ENCODE measurements at regions of chr5 and their contacts with region 1.

Region 1: GRCh38 chr5:134738133-134738962 is at the start of gene CAMLG:
- DNase-seq: peak; percentile 95 to 99 (median 98)

Region 2: DNA sequence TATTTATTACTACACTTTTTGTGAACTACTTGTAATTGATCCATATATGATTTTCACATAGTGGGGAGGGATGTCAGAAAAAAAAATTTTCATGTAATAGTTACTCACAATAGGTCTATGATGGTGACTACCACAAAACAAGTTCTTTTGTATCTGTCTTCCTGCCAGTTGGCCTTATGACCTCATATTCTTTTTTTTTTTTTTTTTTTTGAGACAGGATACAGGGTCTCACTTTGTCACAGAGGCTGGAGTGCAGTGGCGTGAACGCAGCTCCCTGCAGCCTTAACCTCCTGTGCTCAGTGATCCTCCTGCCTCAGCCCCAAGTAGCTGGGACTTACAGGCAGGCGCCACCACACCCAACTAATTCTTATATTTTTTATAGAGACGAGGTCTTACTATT is 78.9 kb before region 1 on chr5:
- intact Hi-C with region 1: loop called (anchors 10 kb)
- DNase-seq: no peak

Region 3: DNA sequence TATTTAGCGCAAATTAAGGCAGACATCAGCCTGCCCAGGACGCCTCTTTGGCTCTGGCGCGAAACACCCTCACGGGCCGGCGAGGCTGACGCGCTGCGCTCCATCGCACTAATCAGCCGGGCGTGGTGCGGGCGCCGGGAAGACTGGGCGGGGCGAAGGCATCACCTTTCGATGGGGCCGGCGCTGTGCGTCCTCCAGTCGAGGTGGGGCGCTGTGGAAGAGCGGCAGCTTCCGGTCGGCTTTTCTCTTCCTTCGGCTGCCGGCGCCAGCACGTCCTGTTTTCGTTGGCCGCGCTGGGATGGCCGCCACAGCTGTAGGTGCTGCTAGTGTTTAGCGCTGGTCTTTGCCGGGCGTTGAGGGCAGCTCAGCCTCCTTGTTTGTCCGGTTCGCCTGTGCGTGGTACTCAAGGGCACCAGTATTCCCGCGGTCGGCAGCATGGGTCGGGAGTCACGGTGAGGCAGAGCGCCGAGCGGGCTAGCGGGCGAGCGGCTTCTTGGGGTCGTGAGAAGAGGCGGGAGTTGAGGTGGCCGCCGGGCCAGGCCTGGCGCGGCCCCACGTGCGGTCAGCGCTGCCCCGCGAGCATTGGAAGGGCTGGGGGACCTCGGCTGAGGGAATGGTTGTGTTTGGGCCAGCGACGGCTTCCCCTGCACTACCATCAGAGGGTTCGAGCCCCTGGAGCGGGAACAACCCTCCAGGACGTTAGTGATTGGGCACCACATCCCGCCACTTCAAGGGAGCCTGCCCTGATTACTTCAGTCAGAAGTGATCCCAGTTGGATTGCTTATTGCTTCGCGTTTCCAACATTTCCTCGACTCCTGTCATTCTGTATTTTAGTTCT is 20.4 kb after region 1 on chr5 and contains the start of gene DDX46:
- intact Hi-C with region 1: loop called (anchors 1 kb)
- DNase-seq: peak; percentile 81 to 97 (median 93)

Region 4: DNA sequence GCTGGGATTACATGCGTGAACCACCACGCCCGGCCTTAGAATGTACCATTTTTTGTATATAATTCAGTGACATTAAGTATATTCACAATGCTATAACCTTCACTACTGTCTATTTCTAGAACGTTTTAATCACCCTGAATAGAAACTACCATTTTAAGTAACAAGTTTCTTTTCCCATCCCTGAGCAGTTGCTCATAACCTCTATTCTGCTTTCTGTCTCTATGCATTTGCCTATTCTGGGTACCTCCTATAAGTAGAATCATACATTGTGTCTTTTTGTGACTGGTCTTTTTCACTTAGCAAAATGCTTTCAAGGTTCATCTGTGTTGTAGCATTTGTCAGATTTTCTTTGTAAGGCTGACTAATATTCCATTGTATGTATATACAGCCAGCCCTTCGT is 60.1 kb after region 1 on chr5:
- intact Hi-C with region 1: no loop called
- DNase-seq: no peak

Region 5: DNA sequence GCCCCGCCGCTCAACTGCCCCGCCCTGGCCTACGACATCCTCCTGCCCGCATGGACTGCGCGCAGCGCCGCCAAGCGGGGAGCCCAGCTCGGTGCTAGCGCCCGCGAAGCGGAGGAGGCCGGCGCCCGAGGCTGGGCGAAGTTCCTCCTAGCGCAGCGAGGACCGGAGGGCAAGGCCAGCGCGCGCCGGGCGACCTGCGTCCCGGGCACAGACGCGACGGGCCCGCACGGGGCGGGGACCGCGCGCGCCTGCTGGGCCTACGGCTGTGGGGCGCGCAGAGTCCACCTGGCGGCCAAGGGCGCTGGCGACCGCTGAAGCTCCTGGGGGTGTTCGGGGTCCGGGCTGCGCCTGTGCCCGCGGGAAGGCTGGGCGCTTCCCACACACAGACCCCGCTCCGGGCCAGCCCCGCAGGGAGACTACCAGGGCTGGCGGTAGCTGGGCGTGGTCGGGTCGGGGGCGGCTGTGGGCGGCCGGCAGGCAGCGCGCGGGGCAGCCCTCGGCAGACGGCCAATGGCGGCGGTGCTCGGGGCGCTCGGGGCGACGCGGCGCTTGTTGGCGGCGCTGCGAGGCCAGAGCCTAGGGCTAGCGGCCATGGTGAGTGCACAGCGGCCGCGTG is 166.4 kb after region 1 on chr5 and contains the start of gene PCBD2:
- intact Hi-C with region 1: loop called (anchors 5 kb)
- DNase-seq: peak; percentile 66 to 95 (median 90)